Activated naive CD4-positive, alpha-beta T cell treated with anti-CD3 and anti-CD28 coated beads for 36 hours (primary cell): ENCODE measurements at regions of chr6 and their contacts with region 1.

Region 1: GRCh38 chr6:17584241-17584803 is 15.8 kb upstream of the FAM8A1 start:
- DNase-seq: peak; percentile 38
- H3K4me3 Mint-ChIP-seq: no peak overlapping the region
- H3K27ac Mint-ChIP-seq: no peak overlapping the region
- H3K4me1 Mint-ChIP-seq: peaks cover 6% of the 10 kb centered on the region
- H3K27me3 Mint-ChIP-seq: peaks cover 5% of the 10 kb centered on the region

Region 2: GRCh38 chr6:16332175-16332542 is 1252.2 kb before region 1 on chr6:
- CTCF ChIA-PET with region 1: no interaction called
- intact Hi-C with region 1: loop called (anchors 5 kb)
- DNase-seq: peak; percentile 94
- H3K4me3 Mint-ChIP-seq: no peak overlapping the region
- H3K27ac Mint-ChIP-seq: no peak overlapping the region
- H3K4me1 Mint-ChIP-seq: no peaks in the 10 kb centered on the region
- H3K27me3 Mint-ChIP-seq: no peaks in the 10 kb centered on the region

Region 3: GRCh38 chr6:17281100-17281494 is 303.2 kb before region 1 on chr6 and contains the start of gene RBM24:
- CTCF ChIA-PET with region 1: no interaction called
- intact Hi-C with region 1: loop called (anchors 1 kb)
- DNase-seq: peak; percentile 64
- H3K4me3 Mint-ChIP-seq: peak within 1 kb of the TSS; percentile 57
- H3K27ac Mint-ChIP-seq: no peak within 1 kb of the TSS
- H3K4me1 Mint-ChIP-seq: peaks cover 10% of the 10 kb centered on the region
- H3K27me3 Mint-ChIP-seq: peaks cover 56% of the 10 kb centered on the region
- total RNA-seq, gene RBM24: not detected

Region 4: DNA sequence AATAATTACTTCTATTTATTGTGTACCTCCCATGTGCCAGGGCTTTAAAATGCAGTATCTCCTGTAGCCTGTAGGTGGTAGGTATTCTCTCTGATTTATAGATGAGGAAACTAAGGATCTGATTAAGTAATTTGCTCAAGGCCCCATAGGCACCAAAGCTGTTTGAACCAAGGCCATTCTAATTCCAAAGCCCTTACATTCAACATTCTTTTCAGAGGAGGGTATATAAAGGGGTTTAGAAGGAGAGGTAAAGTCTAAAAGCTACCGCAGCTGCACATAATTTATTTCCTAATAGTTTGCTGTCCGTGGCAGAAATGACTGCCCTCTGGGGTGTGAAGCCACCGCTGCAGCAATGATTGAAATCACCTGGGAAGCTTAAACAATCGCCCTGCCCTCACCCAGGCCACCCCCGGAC is 79.3 kb before region 1 on chr6:
- CTCF ChIA-PET with region 1: interaction called, 6 read pairs
- intact Hi-C with region 1: loop called (anchors 1 kb)
- DNase-seq: no peak
- H3K4me3 Mint-ChIP-seq: no peak overlapping the region
- H3K27ac Mint-ChIP-seq: no peak overlapping the region
- H3K4me1 Mint-ChIP-seq: no peaks in the 10 kb centered on the region
- H3K27me3 Mint-ChIP-seq: no peaks in the 10 kb centered on the region

Region 5: GRCh38 chr6:17808609-17809008 is 224.3 kb after region 1 on chr6:
- CTCF ChIA-PET with region 1: interaction called, 19 read pairs
- intact Hi-C with region 1: loop called (anchors 1 kb)
- DNase-seq: no peak
- H3K4me3 Mint-ChIP-seq: no peak overlapping the region
- H3K27ac Mint-ChIP-seq: no peak overlapping the region
- H3K4me1 Mint-ChIP-seq: no peaks in the 10 kb centered on the region
- H3K27me3 Mint-ChIP-seq: peaks cover 7% of the 10 kb centered on the region

Region 6: GRCh38 chr6:18122124-18123093 is 538.1 kb after region 1 on chr6 and contains the start of gene NHLRC1:
- CTCF ChIA-PET with region 1: no interaction called
- intact Hi-C with region 1: loop called (anchors 1 kb)
- DNase-seq: peak; percentile 85
- H3K4me3 Mint-ChIP-seq: peak within 1 kb of the TSS; percentile 67
- H3K27ac Mint-ChIP-seq: no peak within 1 kb of the TSS
- H3K4me1 Mint-ChIP-seq: peaks cover 9% of the 10 kb centered on the region
- H3K27me3 Mint-ChIP-seq: peaks cover 25% of the 10 kb centered on the region
- total RNA-seq, gene NHLRC1: 0.10 to 0.25 TPM